HepG2 (cell line): ENCODE measurements at regions of chr5 and their contacts with region 1.

Region 1: GRCh38 chr5:76867827-76868693 is 18.2 kb downstream of the S100Z start:
- DNase-seq: peak; percentile 47
- ATAC-seq: peak; percentile 82
- H3K4me3 ChIP-seq: no peak overlapping the region
- H3K27ac ChIP-seq: no peak overlapping the region
- H3K4me1 ChIP-seq: no peaks in the 10 kb centered on the region
- H3K27me3 ChIP-seq: no peaks in the 10 kb centered on the region
- CTCF ChIP-seq: peak; percentile 79
- EP300 ChIP-seq: no peak
- POLR2A ChIP-seq: no peak
- RAD21 ChIP-seq: peak; percentile 79

Region 2: GRCh38 chr5:76805850-76806505 is 62.1 kb before region 1 on chr5:
- CTCF ChIA-PET with region 1: no interaction called
- POLR2A ChIA-PET with region 1: no interaction called
- in situ Hi-C with region 1: no loop called
- intact Hi-C with region 1: no loop called
- DNase-seq: peak; percentile 87
- ATAC-seq: peak; percentile 56
- H3K4me3 ChIP-seq: no peak overlapping the region
- H3K27ac ChIP-seq: no peak overlapping the region
- H3K4me1 ChIP-seq: peaks cover 29% of the 10 kb centered on the region
- H3K27me3 ChIP-seq: peaks cover 2 to 4% of the 10 kb centered on the region in 2 experiments; a peak in 1 of 5 replicates
- CTCF ChIP-seq: no peak
- EP300 ChIP-seq: peak in 1 of 2 experiments; percentile 84; a peak in 2 of 4 replicates
- POLR2A ChIP-seq: no peak
- RAD21 ChIP-seq: no peak

Region 3: GRCh38 chr5:76926329-76927105 is 58.5 kb after region 1 on chr5:
- CTCF ChIA-PET with region 1: no interaction called
- POLR2A ChIA-PET with region 1: no interaction called
- in situ Hi-C with region 1: no loop called
- intact Hi-C with region 1: no loop called
- DNase-seq: no peak
- ATAC-seq: no peak
- H3K4me3 ChIP-seq: no peak overlapping the region
- H3K27ac ChIP-seq: no peak overlapping the region
- H3K4me1 ChIP-seq: no peaks in the 10 kb centered on the region
- H3K27me3 ChIP-seq: peaks cover 0 to 16% of the 10 kb centered on the region in 2 experiments; a peak in 3 of 5 replicates
- CTCF ChIP-seq: no peak
- EP300 ChIP-seq: no peak
- POLR2A ChIP-seq: no peak
- RAD21 ChIP-seq: no peak

Region 4: DNA sequence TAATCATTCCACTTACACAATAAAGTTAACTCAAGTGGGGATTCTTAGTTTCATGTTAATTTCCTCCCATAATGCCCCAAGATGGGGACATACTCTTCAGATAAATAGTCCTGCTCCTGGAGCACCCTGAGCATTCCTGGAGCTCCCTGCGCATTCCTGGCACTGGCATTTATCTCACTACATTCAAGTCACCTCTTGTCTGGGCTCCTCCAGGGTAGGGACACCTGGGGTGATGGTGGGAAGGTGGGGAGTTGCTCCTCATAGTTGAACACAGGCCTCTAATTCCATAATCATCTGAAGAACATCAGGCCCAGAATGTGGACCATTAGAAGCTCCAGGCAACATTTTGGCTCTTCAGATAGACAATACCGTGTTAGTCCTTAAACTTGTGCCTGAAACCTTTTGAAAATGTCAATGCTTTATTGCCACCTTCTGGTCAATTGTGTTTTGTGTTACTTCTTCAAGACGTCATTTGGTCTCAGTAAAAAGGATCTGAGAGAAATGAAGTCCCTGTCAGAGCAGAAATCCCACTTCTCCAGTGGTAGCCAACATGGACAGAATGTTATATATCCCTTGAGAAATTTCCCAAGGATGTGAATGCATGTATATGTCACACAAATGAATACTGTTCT is 148.0 kb after region 1 on chr5:
- CTCF ChIA-PET with region 1: interaction called, 8 read pairs
- POLR2A ChIA-PET with region 1: no interaction called
- in situ Hi-C with region 1: loop called (anchors 5 kb)
- intact Hi-C with region 1: loop called (anchors 1 kb)
- DNase-seq: peak; percentile 12
- ATAC-seq: no peak
- H3K4me3 ChIP-seq: no peak overlapping the region
- H3K27ac ChIP-seq: no peak overlapping the region
- H3K4me1 ChIP-seq: no peaks in the 10 kb centered on the region
- H3K27me3 ChIP-seq: no peaks in the 10 kb centered on the region
- CTCF ChIP-seq: peak; percentile 45
- EP300 ChIP-seq: no peak
- POLR2A ChIP-seq: no peak
- RAD21 ChIP-seq: 0 out of 2 replicates have a peak, but pooled peaks have one; percentile 31

Region 5: DNA sequence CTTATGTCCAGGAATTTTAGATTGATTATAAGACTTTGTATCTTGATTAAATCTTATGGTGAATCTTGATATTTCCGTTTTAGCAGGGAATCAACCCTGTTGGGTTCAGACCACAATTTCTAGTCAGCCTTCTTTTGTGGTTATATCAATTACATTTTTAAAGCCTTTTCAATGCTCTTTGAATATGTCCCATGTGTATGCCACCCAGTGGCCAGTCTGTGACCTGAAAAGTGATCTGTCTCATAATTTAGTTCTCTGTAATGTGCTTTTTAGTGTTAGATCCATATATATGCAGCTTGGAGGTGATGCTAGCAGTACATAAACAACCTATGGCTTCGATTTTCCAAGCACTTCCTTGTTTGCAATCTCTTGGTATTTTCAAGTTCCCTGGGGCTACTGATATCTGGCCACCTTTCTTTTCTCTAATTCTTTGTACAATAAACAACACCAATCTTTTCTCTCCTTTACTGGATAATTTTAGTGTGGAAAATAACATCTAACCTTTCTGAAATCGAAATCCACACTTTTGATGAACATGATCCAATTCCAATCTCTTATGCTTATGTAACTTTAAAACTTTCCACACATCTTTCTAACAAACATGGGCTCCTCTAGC is 371.2 kb after region 1 on chr5:
- CTCF ChIA-PET with region 1: interaction called, 12 read pairs
- POLR2A ChIA-PET with region 1: no interaction called
- in situ Hi-C with region 1: no loop called
- intact Hi-C with region 1: loop called (anchors 1 kb)
- DNase-seq: peak; percentile 12
- ATAC-seq: peak; percentile 64; the same call in 2 of the 3 replicates
- H3K4me3 ChIP-seq: no peak overlapping the region
- H3K27ac ChIP-seq: no peak overlapping the region
- H3K4me1 ChIP-seq: no peaks in the 10 kb centered on the region
- H3K27me3 ChIP-seq: 0 out of 5 replicates have a peak, but pooled peaks cover 0 to under 1% of the 10 kb centered on the region in 2 experiments
- CTCF ChIP-seq: no peak
- EP300 ChIP-seq: no peak
- POLR2A ChIP-seq: no peak
- RAD21 ChIP-seq: no peak

Region 6: DNA sequence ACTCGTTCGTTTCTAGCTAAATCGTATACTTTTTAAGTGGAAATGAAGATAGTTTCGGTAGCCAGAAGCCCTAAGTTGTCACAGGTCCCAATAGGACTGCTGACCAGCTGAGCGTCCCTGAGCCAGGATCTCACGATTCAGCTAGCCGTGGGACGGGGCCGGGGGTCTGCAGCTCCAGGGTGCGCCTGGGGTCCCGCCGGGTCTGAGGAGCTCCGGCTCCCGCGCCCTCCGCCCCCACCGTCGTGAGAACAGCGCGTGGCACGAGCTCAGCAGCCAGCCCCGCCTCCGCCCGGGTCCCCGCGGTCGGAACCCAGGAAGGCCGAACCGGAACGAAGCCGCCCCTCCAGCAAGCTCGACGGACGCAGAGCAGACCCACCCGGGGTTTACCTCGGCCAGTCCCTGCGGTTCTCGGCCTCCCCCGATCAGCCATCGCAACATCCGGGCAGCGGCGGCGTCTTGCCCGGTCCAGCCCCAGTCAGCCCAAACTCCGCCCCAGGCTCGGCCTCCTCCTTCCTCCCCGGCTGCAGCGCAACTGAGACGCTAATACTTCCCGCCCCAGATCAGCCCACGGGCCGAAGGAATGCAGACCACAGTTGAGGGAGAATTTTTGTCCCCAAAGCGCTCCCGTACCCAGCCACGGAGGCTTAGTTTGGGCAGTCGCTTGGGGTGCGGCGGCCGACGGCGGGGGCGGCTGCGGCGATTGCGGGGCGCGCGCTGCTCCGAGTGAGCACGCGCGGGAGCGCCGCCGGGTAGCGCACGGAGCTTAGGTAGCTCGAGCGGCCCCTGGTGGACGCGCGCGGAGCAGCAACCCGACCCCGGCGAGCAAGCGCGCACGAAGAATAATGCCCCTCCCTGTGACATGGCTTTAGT is 624.0 kb after region 1 on chr5 and contains the start of gene WDR41:
- CTCF ChIA-PET with region 1: interaction called, 3 read pairs
- POLR2A ChIA-PET with region 1: no interaction called
- in situ Hi-C with region 1: no loop called
- intact Hi-C with region 1: loop called (anchors 1 kb)
- DNase-seq: peak; percentile 72
- ATAC-seq: peak; percentile 97
- H3K4me3 ChIP-seq: peak within 1 kb of the TSS; percentile 81 to 99 (median 88)
- H3K27ac ChIP-seq: peak within 1 kb of the TSS; percentile 81
- H3K4me1 ChIP-seq: peaks cover 12% of the 10 kb centered on the region
- H3K27me3 ChIP-seq: no peaks in the 10 kb centered on the region; a peak in 1 of 5 replicates
- CTCF ChIP-seq: peak; percentile 90
- EP300 ChIP-seq: no peak
- POLR2A ChIP-seq: peak; percentile 60 to 67; a peak in 3 of 4 replicates
- RAD21 ChIP-seq: peak; percentile 92
- total RNA-seq, gene WDR41: 39.3 and 52.8 TPM in 2 replicates